ENCODE measurements at regions of chr14 and their contacts with region 1.

Region 1: DNA sequence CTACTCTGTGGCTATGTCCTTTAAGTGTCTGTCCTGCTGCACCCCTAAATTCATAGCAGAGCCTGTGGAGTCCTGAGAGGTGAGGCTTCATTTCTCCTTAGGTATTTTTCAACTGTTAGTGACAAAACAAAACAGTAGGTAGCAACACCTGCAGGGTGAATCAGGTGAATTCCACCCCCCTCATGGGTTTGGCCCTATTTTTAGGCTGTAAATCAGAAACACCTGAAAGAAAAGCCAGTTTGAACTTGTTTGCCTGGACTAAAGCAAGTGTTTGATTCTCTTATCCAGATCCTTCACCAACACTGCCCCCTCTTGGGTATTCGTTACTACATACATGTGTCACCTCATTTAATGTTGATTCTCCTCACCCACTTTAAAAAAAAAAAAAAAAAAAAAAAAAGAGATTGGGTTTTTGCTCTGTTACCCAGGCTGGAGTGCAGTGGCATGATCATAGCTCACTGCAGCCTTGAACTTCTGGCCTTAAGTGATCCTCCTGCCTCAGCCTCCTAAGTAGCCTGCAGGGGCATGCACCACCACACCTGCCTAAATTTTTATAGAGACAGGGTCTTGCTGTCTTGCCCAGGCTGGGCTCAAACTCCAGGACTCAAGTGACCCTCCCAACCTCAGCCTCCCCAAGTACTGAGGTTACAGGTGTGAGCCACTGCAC is 10.3 kb downstream of the TBPL2 start:
- DNase-seq: peak; percentile 86
- H3K4me3 Mint-ChIP-seq: no peak overlapping the region
- H3K27ac Mint-ChIP-seq: no peak overlapping the region
- H3K4me1 Mint-ChIP-seq: peaks cover 24% of the 10 kb centered on the region
- H3K27me3 Mint-ChIP-seq: no peaks in the 10 kb centered on the region

Region 2: GRCh38 chr14:55212634-55213033 is 217.5 kb before region 1 on chr14:
- intact Hi-C with region 1: loop called (anchors 1 kb)
- DNase-seq: no peak
- H3K4me3 Mint-ChIP-seq: no peak overlapping the region
- H3K27ac Mint-ChIP-seq: no peak overlapping the region
- H3K4me1 Mint-ChIP-seq: peaks cover 2% of the 10 kb centered on the region
- H3K27me3 Mint-ChIP-seq: peaks cover 3% of the 10 kb centered on the region

Region 3: DNA sequence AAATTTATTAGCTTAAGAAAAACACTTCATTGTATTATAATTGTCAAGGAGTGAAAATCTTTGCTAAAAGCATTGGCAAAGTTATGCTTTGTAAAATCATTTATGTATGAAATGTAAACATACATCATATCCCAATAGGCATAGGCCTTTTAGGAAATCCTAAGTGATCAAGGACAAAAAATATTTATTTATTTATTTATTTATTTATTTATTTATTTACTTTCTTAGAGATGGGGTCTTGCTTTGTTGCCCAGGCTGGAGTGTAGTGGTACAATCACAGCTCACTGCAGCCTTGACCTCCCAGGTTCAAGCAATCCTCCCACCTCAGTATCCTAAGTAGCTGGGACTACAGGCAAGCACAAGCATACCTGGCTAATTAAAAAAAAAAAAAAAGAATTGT is 206.8 kb before region 1 on chr14:
- intact Hi-C with region 1: no loop called
- DNase-seq: no peak
- H3K4me3 Mint-ChIP-seq: no peak overlapping the region
- H3K27ac Mint-ChIP-seq: no peak overlapping the region
- H3K4me1 Mint-ChIP-seq: peaks cover 3% of the 10 kb centered on the region
- H3K27me3 Mint-ChIP-seq: peaks cover 17% of the 10 kb centered on the region

Region 4: GRCh38 chr14:55245657-55246268 is 184.4 kb before region 1 on chr14:
- intact Hi-C with region 1: loop called (anchors 10 kb)
- DNase-seq: peak; percentile 79
- H3K4me3 Mint-ChIP-seq: no peak overlapping the region
- H3K27ac Mint-ChIP-seq: no peak overlapping the region
- H3K4me1 Mint-ChIP-seq: peaks cover 2% of the 10 kb centered on the region
- H3K27me3 Mint-ChIP-seq: peaks cover 40% of the 10 kb centered on the region

Region 5: GRCh38 chr14:56073799-56074198 is 643.6 kb after region 1 on chr14:
- intact Hi-C with region 1: no loop called
- DNase-seq: no peak
- H3K4me3 Mint-ChIP-seq: no peak overlapping the region
- H3K27ac Mint-ChIP-seq: no peak overlapping the region
- H3K4me1 Mint-ChIP-seq: no peaks in the 10 kb centered on the region
- H3K27me3 Mint-ChIP-seq: peaks cover 13% of the 10 kb centered on the region